Activated T-helper 1 cell treated with anti-CD3 and anti-CD28 coated beads, Interleukin-12 subunit alpha, Interleukin-12 subunit beta, Interleukin-2, Interleukin-4 antibody, amounts not matched to agents 30 ng/mL and 10 ng/mL and 1 ng/mL, durations not matched to agents 14 hours and 24 hours and 36 hours (primary cell): ENCODE measurements at regions of chr10 and their contacts with region 1.

Region 1: DNA sequence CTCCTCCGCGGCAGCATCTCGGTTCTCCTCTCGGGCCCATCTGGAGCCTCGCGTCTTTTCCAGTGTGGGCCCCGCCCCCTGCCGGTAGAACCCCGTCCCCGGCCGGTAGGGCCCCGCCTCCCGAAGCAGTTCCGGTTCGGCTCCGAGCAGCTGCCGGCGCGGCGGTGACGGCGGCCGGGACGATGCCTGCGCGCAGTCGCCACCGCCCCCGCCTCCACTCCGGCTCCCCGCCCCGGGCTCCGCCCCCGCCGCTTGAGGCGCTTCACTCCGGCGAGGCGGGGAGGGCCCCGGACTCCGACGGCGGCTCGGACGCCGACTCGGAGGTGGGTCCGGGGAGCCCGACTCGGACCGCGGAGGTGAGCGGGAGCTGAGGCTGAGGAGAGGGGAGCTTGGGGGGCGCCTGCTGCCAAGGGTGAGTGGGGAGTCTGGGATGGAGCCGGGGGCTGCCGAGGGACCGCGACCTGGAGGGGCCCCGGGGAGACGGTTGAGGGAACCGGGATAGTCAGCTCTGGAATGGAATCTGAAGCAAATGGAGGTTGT is at the start of gene SAMD8:
- DNase-seq: peak; percentile 97
- H3K4me3 Mint-ChIP-seq: peak within 1 kb of the TSS; percentile 95
- H3K27ac Mint-ChIP-seq: peak within 1 kb of the TSS; percentile 99
- H3K4me1 Mint-ChIP-seq: peaks cover 50% of the 10 kb centered on the region
- H3K27me3 Mint-ChIP-seq: no peaks in the 10 kb centered on the region
- total RNA-seq, gene SAMD8: 16.2 and 16.5 TPM in 2 replicates

Region 2: DNA sequence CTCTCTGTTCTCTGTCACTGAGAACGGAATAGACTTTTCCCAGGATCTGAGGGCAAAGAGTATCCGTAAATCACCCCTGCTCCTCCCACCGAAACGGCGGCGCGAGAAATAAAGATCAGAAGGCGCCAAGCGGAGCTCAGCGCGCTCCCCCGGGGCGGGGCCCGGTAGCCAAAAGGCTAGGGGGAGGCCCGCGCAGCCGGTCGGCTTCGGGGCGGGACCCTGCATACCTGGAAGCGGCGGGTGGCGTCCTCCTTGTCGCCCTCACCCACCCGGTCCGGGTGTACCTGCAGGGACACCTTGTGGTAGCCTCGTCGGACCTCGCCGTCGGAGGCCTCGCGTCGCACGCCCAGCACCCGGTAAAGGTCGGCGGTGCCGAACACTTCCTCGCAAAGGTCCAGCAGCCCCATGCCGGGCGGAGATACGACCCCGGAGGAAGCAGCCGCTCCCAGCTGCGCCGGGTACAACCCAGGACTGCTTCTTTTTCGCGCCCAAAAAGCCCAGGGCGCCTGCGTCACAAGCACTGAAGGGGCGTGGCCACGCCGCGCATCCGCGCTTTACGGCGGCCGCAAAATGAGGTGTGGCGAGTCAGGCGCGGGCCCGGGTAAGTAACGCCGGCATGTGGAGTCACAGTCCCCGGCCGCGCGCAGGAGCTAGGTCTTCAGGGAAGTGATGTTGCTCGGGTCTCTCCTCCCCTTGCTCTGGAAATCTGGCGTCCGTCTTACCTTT is 1864.5 kb before region 1 on chr10 and contains the start of gene DNAJC9:
- intact Hi-C with region 1: loop called (anchors 5 kb)
- DNase-seq: peak; percentile 96
- H3K4me3 Mint-ChIP-seq: peak within 1 kb of the TSS; percentile 97
- H3K27ac Mint-ChIP-seq: peak within 1 kb of the TSS; percentile 95
- H3K4me1 Mint-ChIP-seq: peaks cover 67% of the 10 kb centered on the region
- H3K27me3 Mint-ChIP-seq: no peaks in the 10 kb centered on the region
- total RNA-seq, gene DNAJC9: 55.4 and 55.5 TPM in 2 replicates

Region 3: DNA sequence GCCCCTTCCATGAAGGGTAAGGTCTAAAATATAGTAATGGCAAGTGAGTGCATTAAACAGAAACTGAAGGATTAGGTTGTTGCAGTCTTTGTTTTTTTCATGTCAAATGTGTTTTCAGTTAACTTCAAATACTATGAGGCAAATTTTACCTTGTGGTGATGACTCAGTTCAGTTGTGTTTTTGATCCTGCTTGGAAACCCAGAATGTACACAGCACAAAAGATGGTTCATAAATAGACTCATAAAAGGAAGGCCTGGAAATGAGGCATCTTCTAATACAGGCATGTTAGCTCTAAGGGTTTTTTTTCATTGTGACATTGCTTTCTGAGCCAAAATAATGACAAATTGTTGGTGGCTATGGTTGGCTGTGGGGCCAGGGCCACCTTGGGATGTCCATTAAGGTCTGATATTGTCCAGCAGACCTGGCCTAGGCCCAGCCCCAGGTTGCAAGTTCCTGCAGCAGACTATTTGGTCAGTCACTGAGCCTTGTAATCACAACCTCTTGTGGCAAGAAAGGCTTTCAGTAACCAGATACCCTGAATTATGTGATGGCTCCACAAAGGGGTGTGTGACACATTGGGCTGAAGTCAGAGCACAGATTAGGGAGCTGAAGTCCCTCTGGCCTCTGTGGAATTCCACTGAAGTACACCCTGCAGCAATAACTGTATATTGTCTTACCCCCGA is 69.0 kb before region 1 on chr10:
- intact Hi-C with region 1: loop called (anchors 1 kb)
- DNase-seq: no peak
- H3K4me3 Mint-ChIP-seq: peak overlapping the region; percentile 19
- H3K27ac Mint-ChIP-seq: peak overlapping the region; percentile 91
- H3K4me1 Mint-ChIP-seq: peaks cover 41% of the 10 kb centered on the region
- H3K27me3 Mint-ChIP-seq: no peaks in the 10 kb centered on the region

Region 4: DNA sequence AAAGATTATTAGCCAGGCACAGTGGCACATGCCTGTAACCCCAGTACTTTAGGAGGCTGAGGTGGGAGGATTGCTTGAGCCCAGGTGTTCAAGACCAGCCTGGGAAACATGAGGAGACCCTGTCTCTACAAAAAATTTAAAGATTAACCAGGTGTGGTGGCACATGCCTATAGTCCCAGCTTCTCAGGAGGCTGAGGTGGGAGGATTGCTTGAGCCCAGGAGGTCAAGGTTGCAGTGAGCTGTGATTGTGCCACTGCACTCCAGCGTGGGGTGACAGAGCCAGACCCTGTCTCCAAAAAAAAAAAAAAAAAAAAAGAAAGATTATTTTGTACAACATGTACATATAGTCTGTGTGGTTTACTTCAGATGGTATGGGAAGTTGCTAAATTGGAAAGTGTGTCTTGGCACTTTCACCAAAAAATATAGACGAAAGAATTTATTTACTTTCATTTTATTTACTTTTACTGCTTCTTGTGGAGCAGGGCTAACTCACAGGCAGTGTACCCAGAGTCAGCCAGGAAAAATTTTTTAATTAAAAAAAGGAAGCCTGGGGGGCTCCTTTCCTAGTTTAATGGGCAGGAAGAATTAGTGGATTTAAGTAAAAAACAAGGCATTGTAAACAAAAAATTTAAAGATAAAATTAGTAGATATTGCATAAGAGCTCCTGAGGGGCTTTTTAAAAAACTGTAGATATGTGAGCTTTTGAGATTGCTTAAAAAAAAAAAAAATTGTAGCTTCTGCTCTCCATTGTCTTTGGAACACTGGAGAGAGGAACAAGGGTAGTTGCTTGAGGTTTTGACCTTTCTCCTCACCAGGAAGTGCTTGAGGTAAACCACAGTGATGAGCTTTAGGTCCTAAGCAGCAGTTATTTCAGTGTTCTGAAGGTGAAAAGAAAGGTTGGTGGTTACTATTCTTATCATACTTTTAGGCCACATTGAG is 54.5 kb after region 1 on chr10:
- intact Hi-C with region 1: loop called (anchors 1 kb)
- DNase-seq: peak; percentile 20
- H3K4me3 Mint-ChIP-seq: peak overlapping the region; percentile 72
- H3K27ac Mint-ChIP-seq: peak overlapping the region; percentile 86
- H3K4me1 Mint-ChIP-seq: peaks cover 25% of the 10 kb centered on the region
- H3K27me3 Mint-ChIP-seq: no peaks in the 10 kb centered on the region

Region 5: GRCh38 chr10:75210282-75211006 is 99.0 kb after region 1 on chr10 and contains the start of gene VDAC2:
- intact Hi-C with region 1: loop called (anchors 1 kb)
- DNase-seq: peak; percentile 95
- H3K4me3 Mint-ChIP-seq: peak within 1 kb of the TSS; percentile 92
- H3K27ac Mint-ChIP-seq: peak within 1 kb of the TSS; percentile 100
- H3K4me1 Mint-ChIP-seq: peaks cover 30% of the 10 kb centered on the region
- H3K27me3 Mint-ChIP-seq: no peaks in the 10 kb centered on the region
- total RNA-seq, gene VDAC2: 220 and 224 TPM in 2 replicates